Left colon (tissue), 2 donors: ENCODE measurements at regions of chr11 and their contacts with region 1.

Region 1: DNA sequence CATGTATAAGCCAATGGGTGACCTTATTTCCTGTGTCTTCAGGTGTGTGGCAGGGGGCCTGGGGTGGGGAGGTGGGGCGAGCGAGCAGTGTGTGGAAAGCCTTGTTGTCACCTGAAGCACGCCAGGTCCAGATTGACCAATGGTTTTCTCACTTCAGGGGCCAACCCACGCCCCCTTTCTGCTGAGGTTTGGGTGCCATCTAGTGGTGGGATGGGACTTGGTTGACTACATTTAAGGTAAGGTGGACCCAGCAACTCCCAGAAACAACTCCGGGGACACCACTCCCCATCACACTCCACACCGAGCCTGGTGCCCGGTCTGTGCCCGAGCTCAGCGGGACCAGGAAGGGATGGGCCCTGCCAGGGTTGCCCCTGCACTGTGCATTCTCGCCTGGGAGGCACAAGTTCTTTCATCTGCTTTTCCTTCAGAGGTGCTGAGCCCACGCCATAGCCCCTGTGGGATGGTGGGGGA is 40.0 kb downstream of the TPCN2 start:
- DNase-seq: peak; percentile 65 to 80
- ATAC-seq: peak; percentile 80

Region 2: GRCh38 chr11:68912254-68912653 is 176.5 kb before region 1 on chr11:
- intact Hi-C with region 1: loop called in 1 of 2 experiments (anchors 10 kb)
- DNase-seq: no peak
- ATAC-seq: no peak

Region 3: DNA sequence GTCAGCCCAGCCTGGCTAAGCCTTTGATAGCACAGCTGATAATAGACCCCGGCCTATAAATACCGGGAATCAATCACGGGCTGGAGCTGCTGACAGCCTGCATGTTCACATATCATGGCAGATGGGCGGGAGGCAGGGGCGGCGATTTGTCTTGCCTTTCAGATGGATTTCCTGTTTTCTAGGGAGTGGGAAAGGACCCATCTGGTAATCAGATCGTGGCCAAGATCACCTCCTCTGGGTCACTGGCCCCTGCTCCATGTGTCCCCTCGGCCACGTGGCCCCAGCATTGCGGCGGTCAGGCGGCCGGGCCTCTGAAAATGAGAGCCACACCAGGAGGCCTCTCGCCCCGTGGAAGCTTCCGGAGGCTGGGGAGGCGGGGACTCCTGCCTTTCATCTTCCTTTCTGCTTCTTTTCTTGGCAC is 103.6 kb after region 1 on chr11:
- intact Hi-C with region 1: no loop called
- DNase-seq: no peak
- ATAC-seq: no peak